OCI-LY7 (cell line): ENCODE measurements at regions of chr1 and their contacts with region 1.

Region 1: DNA sequence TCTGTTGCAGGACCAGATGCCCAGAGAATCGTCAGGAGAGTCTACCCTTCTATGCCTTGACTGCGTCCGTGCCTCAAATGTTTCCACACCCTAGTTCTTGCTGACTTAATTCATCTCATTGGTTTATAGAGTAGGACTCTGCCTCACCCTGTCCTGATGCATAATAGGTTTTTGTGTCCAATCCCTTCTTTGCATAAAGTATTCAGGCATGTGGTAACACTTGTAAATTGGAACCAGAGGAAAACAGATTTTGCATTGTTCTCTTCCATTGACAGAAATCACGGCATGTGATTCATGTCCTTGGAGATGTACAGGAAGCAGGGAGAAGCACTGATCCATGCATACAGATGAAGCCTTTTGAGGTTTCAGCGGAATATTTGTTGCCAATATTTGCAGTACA is 29.5 kb downstream of the PLPPR5 start:
- DNase-seq: no peak
- H3K4me3 ChIP-seq: no peak overlapping the region
- H3K27ac ChIP-seq: no peak overlapping the region
- H3K4me1 ChIP-seq: no peaks in the 10 kb centered on the region
- CTCF ChIP-seq: no peak

Region 2: GRCh38 chr1:99028431-99028830 is 53.3 kb after region 1 on chr1:
- CTCF ChIA-PET with region 1: no interaction called
- POLR2A ChIA-PET with region 1: no interaction called
- intact Hi-C with region 1: loop called (anchors 10 kb)
- DNase-seq: no peak
- H3K4me3 ChIP-seq: no peak overlapping the region
- H3K27ac ChIP-seq: no peak overlapping the region
- H3K4me1 ChIP-seq: no peaks in the 10 kb centered on the region
- CTCF ChIP-seq: no peak